ENCODE measurements at regions of chr4 and their contacts with region 1.

Region 1: DNA sequence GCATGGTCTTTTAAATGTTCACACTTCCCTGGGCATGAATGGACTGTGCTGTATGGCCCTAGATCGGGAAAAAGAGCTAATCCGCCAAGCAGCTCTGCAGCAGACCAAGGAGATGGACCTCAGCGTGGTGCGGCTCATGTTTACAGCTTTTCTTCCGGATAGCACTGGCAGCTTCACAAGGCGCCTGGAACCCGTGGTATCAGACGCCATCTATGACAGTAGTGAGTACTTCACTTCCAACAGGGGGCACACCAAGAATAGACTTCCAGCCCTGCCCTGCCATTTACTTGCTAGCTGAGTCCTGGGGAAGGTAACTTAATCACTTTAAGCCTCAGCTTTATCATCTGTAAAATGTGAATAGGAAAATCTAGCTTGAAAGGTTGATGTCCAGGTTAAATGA is 77.7 kb downstream of the NFKB1 start:
- DNase-seq: peak; percentile 44 to 50
- H3K4me3 ChIP-seq: no peak overlapping the region
- H3K27ac ChIP-seq: no peak overlapping the region
- H3K4me1 ChIP-seq: no peaks in the 10 kb centered on the region; a peak in 1 of 7 replicates
- H3K27me3 ChIP-seq: no peaks in the 10 kb centered on the region; a peak in 1 of 7 replicates
- CTCF ChIP-seq: peak; percentile 52 to 83 (median 76)
- EP300 ChIP-seq: no peak
- POLR2A ChIP-seq: no peak
- RAD21 ChIP-seq: peak; percentile 78 to 82

Region 2: GRCh38 chr4:102454981-102455685 is 123.7 kb before region 1 on chr4:
- CTCF ChIA-PET with region 1: interaction called, 10 read pairs
- POLR2A ChIA-PET with region 1: no interaction called
- DNase-seq: no peak
- H3K4me3 ChIP-seq: no peak overlapping the region
- H3K27ac ChIP-seq: no peak overlapping the region
- H3K4me1 ChIP-seq: no peaks in the 10 kb centered on the region; a peak in 1 of 7 replicates
- H3K27me3 ChIP-seq: no peaks in the 10 kb centered on the region
- CTCF ChIP-seq: no peak
- EP300 ChIP-seq: no peak
- POLR2A ChIP-seq: no peak
- RAD21 ChIP-seq: no peak

Region 3: DNA sequence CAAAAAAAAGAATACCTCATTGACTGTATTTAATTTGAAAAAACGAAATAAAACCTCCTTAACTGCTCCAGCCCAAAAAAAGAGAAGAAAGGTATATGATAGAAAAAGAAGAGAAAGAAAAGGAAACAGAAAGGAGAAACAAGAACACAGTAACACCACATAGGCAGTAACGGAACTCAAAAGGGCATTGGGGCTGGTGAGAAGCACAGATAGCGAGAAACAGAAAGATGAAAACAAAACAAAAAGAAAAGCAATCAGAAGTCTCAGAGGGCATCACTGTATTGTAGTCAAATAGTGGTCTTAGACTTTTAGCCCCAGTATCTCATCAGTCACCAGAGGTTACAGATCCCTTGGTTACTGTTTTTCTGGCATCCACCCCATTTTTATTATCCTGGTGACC is 10.9 kb after region 1 on chr4:
- CTCF ChIA-PET with region 1: interaction called, 18 read pairs
- POLR2A ChIA-PET with region 1: no interaction called
- DNase-seq: no peak
- H3K4me3 ChIP-seq: no peak overlapping the region
- H3K27ac ChIP-seq: no peak overlapping the region
- H3K4me1 ChIP-seq: no peaks in the 10 kb centered on the region
- H3K27me3 ChIP-seq: no peaks in the 10 kb centered on the region
- CTCF ChIP-seq: no peak
- EP300 ChIP-seq: no peak
- POLR2A ChIP-seq: no peak
- RAD21 ChIP-seq: no peak

Region 4: DNA sequence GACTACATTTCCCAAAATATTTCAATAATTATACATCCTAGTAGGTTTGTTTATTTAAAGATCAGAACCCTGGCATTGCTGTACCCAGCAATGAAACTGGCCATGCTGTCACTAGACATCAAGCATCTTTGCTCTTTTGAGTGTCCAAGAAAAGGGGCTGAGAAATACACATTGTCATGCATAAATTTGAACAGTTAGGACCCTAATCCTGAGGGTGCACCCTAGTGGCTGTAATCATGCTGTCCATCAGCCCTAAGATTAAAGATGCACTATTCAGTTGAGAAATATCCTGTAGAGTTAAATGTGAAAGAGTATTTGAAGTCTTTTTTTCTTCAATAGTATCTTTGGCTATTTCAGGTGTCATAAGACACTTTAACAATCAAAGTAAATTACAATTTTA is 31.2 kb after region 1 on chr4:
- CTCF ChIA-PET with region 1: interaction called, 10 read pairs
- POLR2A ChIA-PET with region 1: no interaction called
- DNase-seq: no peak
- H3K4me3 ChIP-seq: no peak overlapping the region
- H3K27ac ChIP-seq: no peak overlapping the region
- H3K4me1 ChIP-seq: peaks cover 0 to 3% (median 0%) of the 10 kb centered on the region in 4 experiments; a peak in 2 of 7 replicates
- H3K27me3 ChIP-seq: no peaks in the 10 kb centered on the region
- CTCF ChIP-seq: peak in 1 of 3 experiments; percentile 19; a peak in 1 of 4 replicates
- EP300 ChIP-seq: no peak
- POLR2A ChIP-seq: no peak
- RAD21 ChIP-seq: no peak

Region 5: GRCh38 chr4:103008875-103009729 is 430.3 kb after region 1 on chr4:
- CTCF ChIA-PET with region 1: interaction called, 11 read pairs
- POLR2A ChIA-PET with region 1: no interaction called
- DNase-seq: no peak
- H3K4me3 ChIP-seq: no peak overlapping the region
- H3K27ac ChIP-seq: no peak overlapping the region
- H3K4me1 ChIP-seq: no peaks in the 10 kb centered on the region
- H3K27me3 ChIP-seq: no peaks in the 10 kb centered on the region
- CTCF ChIP-seq: peak in 2 of 3 experiments; percentile 58 to 76; a peak in 2 of 4 replicates
- EP300 ChIP-seq: no peak
- POLR2A ChIP-seq: no peak
- RAD21 ChIP-seq: peak; percentile 91 to 97

Measured in H1 (cell line).